ENCODE measurements at regions of chr12 and their contacts with region 1.

Region 1: DNA sequence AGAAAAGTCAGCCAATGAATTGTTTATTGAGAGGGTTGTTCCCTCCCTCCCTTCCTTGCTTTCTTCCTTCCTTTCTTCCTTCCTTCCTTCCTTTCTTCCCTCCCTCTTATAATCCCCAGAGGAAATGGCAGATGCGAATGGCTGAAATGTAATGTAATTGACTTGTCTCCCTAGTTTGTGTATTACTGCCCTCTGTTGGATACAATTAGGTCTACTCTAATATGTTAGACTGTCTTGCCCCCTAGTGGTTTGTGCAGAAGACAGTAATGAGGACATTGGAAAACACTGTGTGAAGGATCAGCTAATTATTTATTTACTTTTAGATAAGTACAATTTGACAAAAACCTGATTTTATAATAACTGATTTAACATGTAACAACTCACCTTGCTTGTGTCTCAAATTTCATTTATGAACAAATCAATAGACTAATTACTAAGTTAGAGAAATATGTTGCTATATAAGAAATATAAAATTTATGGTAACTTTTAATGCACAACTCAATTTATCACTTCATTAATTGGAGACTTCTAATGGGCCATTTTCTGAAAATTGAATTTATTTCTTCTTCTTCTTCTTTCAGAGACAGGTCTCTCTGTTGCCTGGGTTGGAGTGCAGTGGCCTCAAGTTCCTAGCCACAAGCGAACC is 229.8 kb upstream of the LRIG3 start:
- DNase-seq: no peak
- ATAC-seq: peak; percentile 94

Region 2: GRCh38 chr12:57983146-57983857 is 1166.8 kb before region 1 on chr12:
- intact Hi-C with region 1: loop called (anchors 10 kb)
- DNase-seq: no peak
- ATAC-seq: no peak

Region 3: GRCh38 chr12:58346032-58346632 is 804.0 kb before region 1 on chr12:
- intact Hi-C with region 1: loop called (anchors 5 kb)
- DNase-seq: no peak
- ATAC-seq: peak; percentile 72

Region 4: DNA sequence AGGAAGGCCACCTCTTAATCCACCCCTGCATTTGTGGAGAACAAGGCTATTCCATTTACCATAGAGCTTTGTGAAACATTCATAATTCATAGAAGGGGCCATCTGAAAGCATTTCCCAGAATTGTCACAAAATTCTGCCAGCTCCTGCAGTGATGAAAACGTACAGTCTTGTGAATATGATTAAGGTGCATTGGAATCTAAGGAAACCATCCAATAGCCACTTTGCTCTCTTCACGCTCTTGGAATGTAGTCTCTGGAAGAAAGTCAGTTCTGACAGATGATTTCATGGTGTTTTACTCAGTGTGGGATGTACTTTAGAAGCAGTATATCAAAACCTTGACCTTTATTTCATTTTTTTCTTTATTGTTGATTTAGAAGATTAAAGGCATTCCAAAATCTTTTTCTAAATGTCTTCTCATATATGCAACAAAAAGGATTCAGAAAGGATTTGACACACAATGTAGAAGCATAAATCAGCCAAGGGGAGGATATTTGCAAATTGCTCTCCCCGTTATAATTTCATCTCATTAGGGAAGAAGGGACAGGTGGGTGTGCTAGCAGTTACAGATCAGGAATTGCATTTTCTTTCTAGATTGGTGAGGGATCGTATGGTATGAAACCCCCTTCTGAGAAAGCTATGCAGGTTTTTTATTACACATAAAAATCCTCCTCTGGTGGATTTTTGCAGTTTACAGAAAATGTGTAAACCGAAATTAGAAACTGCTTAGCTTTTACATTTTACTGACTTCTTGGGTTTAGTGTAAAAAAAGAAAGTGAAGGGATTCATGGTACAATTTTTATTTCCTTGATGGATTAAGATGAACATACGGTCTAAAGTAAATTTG is 620.0 kb before region 1 on chr12:
- intact Hi-C with region 1: loop called (anchors 5 kb)
- DNase-seq: no peak
- ATAC-seq: no peak

Region 5: GRCh38 chr12:58540480-58541299 is 609.4 kb before region 1 on chr12:
- intact Hi-C with region 1: loop called (anchors 5 kb)
- DNase-seq: peak; percentile 69
- ATAC-seq: peak; percentile 89

Region 6: DNA sequence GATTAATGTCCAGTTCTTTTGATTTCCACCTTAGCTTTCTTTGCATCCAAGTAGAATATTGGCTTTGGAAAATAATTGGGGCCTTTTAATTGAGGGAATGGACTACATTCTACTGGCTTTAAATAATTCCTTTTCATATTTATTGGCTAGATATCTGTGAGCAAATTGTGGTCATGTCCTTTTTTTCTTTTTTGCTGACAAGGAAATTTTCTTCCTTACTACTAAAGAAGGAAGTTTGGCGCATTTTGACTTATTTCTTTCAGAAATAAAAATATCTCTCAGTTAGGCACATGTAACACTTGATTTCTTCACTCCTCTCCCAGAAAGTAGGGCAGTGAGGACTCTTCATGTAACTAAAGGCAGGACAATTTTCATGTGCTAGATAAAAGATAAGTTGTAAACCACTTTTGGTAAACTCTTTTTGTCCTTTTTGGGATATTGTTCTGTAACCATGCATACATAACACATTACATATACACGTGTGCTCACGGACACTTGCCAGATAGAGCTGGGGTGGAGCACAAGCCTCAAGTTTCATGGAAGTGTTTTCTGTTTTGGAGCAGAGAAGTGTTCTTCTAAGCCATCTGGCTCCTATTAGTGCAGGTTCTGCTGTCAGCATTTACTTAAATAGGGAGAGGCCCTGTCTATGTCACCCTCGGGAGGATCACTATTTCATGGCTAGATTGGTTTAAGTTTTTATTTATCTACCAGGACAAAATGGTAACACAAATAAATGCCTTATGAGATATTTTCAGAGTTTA is 144.7 kb before region 1 on chr12:
- intact Hi-C with region 1: no loop called
- DNase-seq: no peak
- ATAC-seq: peak; percentile 49

Region 7: DNA sequence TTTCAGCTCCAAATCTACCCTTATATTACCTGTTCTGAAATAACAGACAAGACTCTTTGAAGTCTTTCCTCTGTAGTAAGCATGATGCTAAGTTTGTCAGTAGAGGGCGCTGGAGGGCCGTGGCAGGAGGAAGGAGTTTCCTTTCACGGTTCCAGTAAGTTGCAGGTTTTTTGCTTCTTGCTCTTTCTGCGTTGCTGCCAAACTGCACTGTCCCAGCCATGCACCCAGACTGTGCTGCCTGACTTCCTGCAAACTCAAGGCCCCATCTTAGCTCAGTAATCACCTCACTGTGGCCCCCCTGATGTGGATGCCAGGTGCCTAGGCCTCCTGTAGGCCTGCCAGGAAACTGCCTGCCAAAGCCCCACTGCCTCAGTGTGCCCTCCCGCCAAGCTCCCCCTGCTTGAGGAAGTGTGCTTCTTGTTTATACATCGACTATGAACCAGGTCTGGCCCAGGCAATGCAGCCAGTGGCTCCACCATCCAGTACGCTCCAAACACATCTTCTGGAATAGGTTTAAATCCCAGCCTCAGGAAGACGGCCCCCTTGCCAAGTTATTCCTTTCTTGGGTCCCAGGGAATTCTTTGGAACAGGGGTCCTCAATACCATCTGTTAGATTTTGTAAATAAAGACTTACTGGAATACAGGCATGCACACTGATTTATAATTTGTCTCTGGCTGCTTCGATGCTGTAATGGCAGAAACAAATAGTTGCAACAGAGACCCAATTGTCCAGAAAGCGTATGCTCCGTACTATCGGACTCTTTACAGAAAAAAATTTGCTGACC is 36.1 kb before region 1 on chr12:
- intact Hi-C with region 1: loop called (anchors 5 kb)
- DNase-seq: peak; percentile 74
- ATAC-seq: peak; percentile 80

Measured in Right ventricle myocardium superior (tissue), 1 donor.